Posterior vena cava (tissue), 2 donors: ENCODE measurements at regions of chr12 and their contacts with region 1.

Region 1: DNA sequence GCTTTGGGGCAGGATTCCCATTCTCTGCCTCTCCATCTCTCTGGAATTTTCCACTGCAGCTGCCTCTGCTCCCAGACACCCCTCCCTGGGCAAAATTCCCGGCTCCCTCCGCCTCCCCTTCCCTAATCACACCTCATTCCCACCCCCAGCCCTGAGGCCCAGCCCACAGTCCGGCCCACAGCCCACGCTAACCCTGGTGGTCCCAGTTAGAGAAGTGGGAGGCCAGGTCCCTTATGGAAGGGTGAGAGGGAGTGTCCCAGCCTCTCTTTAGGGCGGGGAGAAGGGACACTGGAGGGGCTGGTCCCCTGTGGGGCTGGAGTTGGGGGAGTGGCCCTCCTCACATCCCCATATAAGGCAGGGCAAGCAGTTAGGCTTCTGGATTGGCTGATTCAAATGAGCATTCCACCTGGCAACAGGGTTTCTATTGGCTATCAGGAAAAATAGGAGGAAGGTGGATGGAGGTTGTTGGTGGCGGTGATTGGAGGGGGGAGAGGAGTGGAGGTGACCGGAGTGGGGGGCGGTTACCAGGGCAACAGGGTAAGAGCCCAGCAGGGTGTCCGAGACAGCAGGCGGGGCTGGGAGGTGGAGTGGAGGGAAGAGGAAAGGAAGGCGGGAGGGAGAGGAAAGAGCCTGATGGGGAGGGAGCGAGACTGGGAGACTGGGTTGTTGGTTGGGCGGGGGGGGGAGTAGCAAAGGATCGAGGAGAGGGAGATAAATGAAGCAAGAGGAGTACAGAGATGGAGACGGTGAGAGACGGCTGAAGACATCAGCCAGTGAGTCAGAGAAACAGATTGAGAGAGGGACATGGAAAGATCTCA is 1.9 kb upstream of the PTMS start:
- DNase-seq: peak; percentile 97

Region 2: GRCh38 chr12:6778574-6779550 is 14.6 kb after region 1 on chr12:
- intact Hi-C with region 1: no loop called
- DNase-seq: peak; percentile 98

Region 3: GRCh38 chr12:6839482-6840201 is 75.4 kb after region 1 on chr12:
- intact Hi-C with region 1: loop called in 1 of 2 experiments (anchors 5 kb)
- DNase-seq: no peak